T-cell (primary cell): ENCODE measurements at regions of chr19 and their contacts with region 1.

Region 1: GRCh38 chr19:56660381-56661107 is 11.0 kb downstream of the ZNF835 start:
- DNase-seq: no peak
- ATAC-seq: no peak
- H3K4me3 ChIP-seq: no peak overlapping the region
- H3K4me3 Mint-ChIP-seq: no peak overlapping the region
- H3K27ac ChIP-seq: no peak overlapping the region
- H3K27ac Mint-ChIP-seq: no peak overlapping the region
- H3K4me1 ChIP-seq: no peaks in the 10 kb centered on the region
- H3K4me1 Mint-ChIP-seq: no peaks in the 10 kb centered on the region
- H3K27me3 ChIP-seq: no peaks in the 10 kb centered on the region
- H3K27me3 Mint-ChIP-seq: no peaks in the 10 kb centered on the region

Region 2: DNA sequence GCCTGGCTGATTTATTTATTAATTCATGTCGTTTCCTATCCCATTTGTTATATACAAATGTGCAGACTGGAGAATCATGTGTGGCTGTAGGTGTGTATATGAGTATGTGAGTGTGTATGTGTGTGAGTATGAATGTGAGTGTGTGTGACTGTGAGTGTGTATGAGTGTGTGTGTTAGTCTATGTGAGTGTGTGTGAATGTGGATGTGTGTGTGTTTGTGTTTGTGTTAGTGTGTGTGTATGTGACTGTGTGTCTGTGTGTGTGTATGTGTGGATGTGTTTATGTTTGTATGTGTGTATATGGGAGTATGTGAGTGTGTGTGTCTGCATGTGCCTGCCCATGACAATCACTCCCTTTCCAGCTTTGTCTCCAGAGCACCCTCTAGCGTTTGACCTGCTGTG is 15.5 kb before region 1 on chr19:
- CTCF ChIA-PET with region 1: no interaction called
- POLR2A ChIA-PET with region 1: no interaction called
- DNase-seq: no peak
- ATAC-seq: no peak
- H3K4me3 ChIP-seq: no peak overlapping the region
- H3K4me3 Mint-ChIP-seq: no peak overlapping the region
- H3K27ac ChIP-seq: no peak overlapping the region
- H3K27ac Mint-ChIP-seq: no peak overlapping the region
- H3K4me1 ChIP-seq: no peaks in the 10 kb centered on the region
- H3K4me1 Mint-ChIP-seq: no peaks in the 10 kb centered on the region
- H3K27me3 ChIP-seq: peaks cover 0 to 30% of the 10 kb centered on the region in 2 experiments
- H3K27me3 Mint-ChIP-seq: peaks cover 7 to 16% of the 10 kb centered on the region in 2 donors

Region 3: DNA sequence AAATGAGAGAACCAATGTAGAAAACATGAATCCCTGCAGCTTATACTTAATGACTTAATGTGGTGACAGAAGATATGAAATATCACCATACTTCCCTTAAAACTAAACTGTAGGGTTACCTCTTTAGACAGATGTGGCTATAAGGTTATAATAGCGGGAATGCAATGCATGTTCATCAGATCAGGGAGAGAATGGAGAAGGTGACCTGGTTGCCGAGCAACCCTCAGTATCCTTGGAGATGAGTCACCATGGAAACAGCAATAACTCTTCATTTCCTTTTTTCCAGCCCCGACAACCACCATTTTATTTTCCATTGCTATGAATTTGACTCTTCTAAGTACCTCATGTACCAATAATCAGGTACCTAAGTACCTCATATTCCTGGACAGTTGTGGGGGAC is 39.0 kb after region 1 on chr19:
- CTCF ChIA-PET with region 1: no interaction called
- POLR2A ChIA-PET with region 1: no interaction called
- DNase-seq: no peak
- ATAC-seq: no peak
- H3K4me3 ChIP-seq: no peak overlapping the region
- H3K4me3 Mint-ChIP-seq: no peak overlapping the region
- H3K27ac ChIP-seq: no peak overlapping the region
- H3K27ac Mint-ChIP-seq: no peak overlapping the region
- H3K4me1 ChIP-seq: no peaks in the 10 kb centered on the region
- H3K4me1 Mint-ChIP-seq: no peaks in the 10 kb centered on the region
- H3K27me3 ChIP-seq: no peaks in the 10 kb centered on the region
- H3K27me3 Mint-ChIP-seq: no peaks in the 10 kb centered on the region

Region 4: DNA sequence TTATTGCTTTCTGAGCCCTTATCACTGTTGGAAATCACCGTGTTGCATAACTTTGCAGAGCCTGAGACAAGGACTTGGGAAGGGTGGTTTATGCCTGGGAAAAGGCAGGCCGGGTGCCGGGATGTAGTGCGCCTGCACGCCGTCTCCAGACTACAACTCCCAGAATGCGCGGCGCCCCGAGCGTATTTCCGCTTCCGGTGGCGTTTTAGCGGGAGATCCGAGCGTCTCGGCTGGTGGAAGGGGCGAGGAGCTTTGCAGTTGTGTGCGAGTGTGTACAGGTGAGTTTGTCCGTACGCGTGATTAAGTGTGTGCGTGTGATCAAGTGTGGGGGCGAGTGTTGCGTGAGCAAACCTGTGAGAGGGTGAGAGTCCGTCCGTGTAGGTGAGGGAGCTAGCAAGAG is 104.6 kb after region 1 on chr19:
- CTCF ChIA-PET with region 1: no interaction called
- POLR2A ChIA-PET with region 1: no interaction called
- DNase-seq: peak in 3 of 35 experiments; percentile 1 to 24 (median 6)
- ATAC-seq: no peak
- H3K4me3 ChIP-seq: peak overlapping the region; percentile 15 to 55
- H3K4me3 Mint-ChIP-seq: peak overlapping the region; percentile 41 to 79 (median 64)
- H3K27ac ChIP-seq: no peak overlapping the region
- H3K27ac Mint-ChIP-seq: no peak overlapping the region
- H3K4me1 ChIP-seq: peaks cover 0 to 6% of the 10 kb centered on the region in 2 experiments
- H3K4me1 Mint-ChIP-seq: peaks cover 9 to 10% (median 10%) of the 10 kb centered on the region in 3 donors
- H3K27me3 ChIP-seq: peaks cover 0 to 6% of the 10 kb centered on the region in 2 experiments
- H3K27me3 Mint-ChIP-seq: peaks cover 1 to 8% of the 10 kb centered on the region in 2 donors

Region 5: DNA sequence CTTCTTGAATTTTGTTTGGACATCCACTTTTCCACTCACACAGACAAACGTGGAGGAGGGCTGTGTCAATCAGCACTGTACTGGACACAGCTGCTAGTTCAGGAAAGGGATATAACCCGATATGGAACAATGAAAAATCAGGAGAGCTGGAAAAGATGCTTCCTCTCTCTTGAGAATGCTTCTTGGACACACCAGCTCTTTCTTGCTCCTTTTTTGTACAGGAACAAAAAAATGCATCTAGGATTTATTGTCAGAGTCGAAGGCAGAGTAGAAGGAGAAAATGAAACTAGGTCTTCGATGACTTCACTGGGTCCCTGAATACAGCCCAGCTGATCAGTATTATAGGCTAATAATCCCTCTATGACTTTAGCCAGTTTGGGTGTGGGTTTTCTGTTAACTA is 117.8 kb after region 1 on chr19:
- CTCF ChIA-PET with region 1: interaction called in 1 of 2 experiments, 11 read pairs
- POLR2A ChIA-PET with region 1: no interaction called
- DNase-seq: no peak
- ATAC-seq: no peak
- H3K4me3 ChIP-seq: no peak overlapping the region
- H3K4me3 Mint-ChIP-seq: no peak overlapping the region
- H3K27ac ChIP-seq: no peak overlapping the region
- H3K27ac Mint-ChIP-seq: no peak overlapping the region
- H3K4me1 ChIP-seq: no peaks in the 10 kb centered on the region
- H3K4me1 Mint-ChIP-seq: no peaks in the 10 kb centered on the region
- H3K27me3 ChIP-seq: no peaks in the 10 kb centered on the region
- H3K27me3 Mint-ChIP-seq: no peaks in the 10 kb centered on the region